ENCODE measurements at regions of chr11 and their contacts with region 1.

Region 1: DNA sequence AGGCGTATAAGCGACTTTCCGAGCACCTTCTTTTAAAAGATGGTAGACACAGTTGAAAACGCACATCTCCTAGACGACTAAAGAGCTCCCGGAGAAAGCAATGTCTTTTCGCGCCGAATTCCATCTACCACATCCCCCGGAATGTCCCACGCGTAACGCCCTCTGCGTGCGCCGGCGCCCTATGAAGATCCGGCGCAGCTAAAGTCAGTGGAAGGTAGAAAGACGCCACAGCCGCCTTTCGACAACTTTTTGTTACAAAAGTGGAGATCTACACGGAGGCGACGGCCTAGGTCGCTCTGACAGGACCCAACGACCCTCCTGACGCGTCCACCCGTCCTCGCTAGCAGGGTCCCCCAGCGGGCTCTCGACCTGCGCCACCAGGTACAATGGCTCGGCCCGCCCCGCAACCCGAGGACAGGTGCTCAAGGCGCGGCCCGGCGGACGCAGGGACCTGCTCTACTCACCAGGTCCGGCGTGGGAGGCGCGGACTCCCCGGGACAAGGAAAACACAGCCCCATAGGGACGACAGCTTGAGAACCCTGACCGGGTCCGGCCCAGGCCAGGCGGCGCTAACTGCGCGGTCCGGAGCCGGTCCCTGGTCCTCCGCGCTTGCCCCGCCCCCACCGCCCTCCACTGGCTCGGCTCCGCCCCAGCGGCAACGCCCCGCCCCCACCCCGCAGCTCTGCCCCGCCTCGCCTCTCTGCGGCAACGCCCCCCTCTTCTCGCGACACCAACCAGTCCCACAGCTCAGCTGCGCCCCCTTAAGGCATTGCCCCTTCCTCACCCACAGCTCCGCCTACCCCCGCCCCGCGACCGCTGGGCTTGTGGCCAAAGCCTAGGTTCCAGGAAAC is at the start of gene SVIP:
- DNase-seq: peak; percentile 99
- H3K4me3 ChIP-seq: peak within 1 kb of the TSS; percentile 91 to 99 (median 95)
- H3K27ac ChIP-seq: peak within 1 kb of the TSS; percentile 86
- H3K4me1 ChIP-seq: peaks cover 26% of the 10 kb centered on the region
- H3K27me3 ChIP-seq: no peaks in the 10 kb centered on the region
- CTCF ChIP-seq: peak; percentile 76 to 88
- POLR2A ChIP-seq: peak; percentile 94
- total RNA-seq, gene SVIP: 69.5 and 70.5 TPM in 2 replicates

Region 2: GRCh38 chr11:22432291-22433093 is 397.0 kb before region 1 on chr11:
- CTCF ChIA-PET with region 1: no interaction called
- POLR2A ChIA-PET with region 1: no interaction called
- dilution Hi-C with region 1: no loop called
- intact Hi-C with region 1: loop called (anchors 5 kb)
- DNase-seq: peak; percentile 82
- H3K4me3 ChIP-seq: peak overlapping the region; percentile 20 to 46 (median 45)
- H3K27ac ChIP-seq: peak overlapping the region; percentile 32
- H3K4me1 ChIP-seq: peaks cover 10% of the 10 kb centered on the region
- H3K27me3 ChIP-seq: no peaks in the 10 kb centered on the region
- CTCF ChIP-seq: no peak
- POLR2A ChIP-seq: no peak

Region 3: GRCh38 chr11:22670830-22671229 is 158.6 kb before region 1 on chr11:
- CTCF ChIA-PET with region 1: interaction called, 13 read pairs
- POLR2A ChIA-PET with region 1: no interaction called
- dilution Hi-C with region 1: no loop called
- intact Hi-C with region 1: no loop called
- DNase-seq: peak; percentile 44
- H3K4me3 ChIP-seq: no peak overlapping the region
- H3K27ac ChIP-seq: no peak overlapping the region
- H3K4me1 ChIP-seq: peaks cover 2% of the 10 kb centered on the region
- H3K27me3 ChIP-seq: peaks cover 38 to 70% of the 10 kb centered on the region in 2 experiments
- CTCF ChIP-seq: no peak
- POLR2A ChIP-seq: no peak

Region 4: GRCh38 chr11:22807855-22808570 is 21.4 kb before region 1 on chr11:
- CTCF ChIA-PET with region 1: interaction called, 21 read pairs
- POLR2A ChIA-PET with region 1: interaction called, 5 read pairs
- dilution Hi-C with region 1: no loop called
- intact Hi-C with region 1: loop called (anchors 1 kb)
- DNase-seq: peak; percentile 89
- H3K4me3 ChIP-seq: peak overlapping the region in 1 of 3 experiments; percentile 16
- H3K27ac ChIP-seq: peak overlapping the region; percentile 52
- H3K4me1 ChIP-seq: peaks cover 29% of the 10 kb centered on the region
- H3K27me3 ChIP-seq: no peaks in the 10 kb centered on the region
- CTCF ChIP-seq: no peak
- POLR2A ChIP-seq: peak; percentile 61

Measured in endothelial cell of umbilical vein (primary cell).